Breast epithelium (tissue), 4 donors: ENCODE measurements at regions of chr14 and their contacts with region 1.

Region 1: GRCh38 chr14:36373982-36374673 is 53.7 kb upstream of the MBIP start:
- DNase-seq: peak; percentile 45 to 72
- H3K4me3 ChIP-seq: no peak overlapping the region
- H3K27ac ChIP-seq: no peak overlapping the region
- H3K4me1 ChIP-seq: no peaks in the 10 kb centered on the region
- H3K27me3 ChIP-seq: no peaks in the 10 kb centered on the region
- CTCF ChIP-seq: peak; percentile 48 to 57 (median 57)
- POLR2A ChIP-seq: no peak

Region 2: DNA sequence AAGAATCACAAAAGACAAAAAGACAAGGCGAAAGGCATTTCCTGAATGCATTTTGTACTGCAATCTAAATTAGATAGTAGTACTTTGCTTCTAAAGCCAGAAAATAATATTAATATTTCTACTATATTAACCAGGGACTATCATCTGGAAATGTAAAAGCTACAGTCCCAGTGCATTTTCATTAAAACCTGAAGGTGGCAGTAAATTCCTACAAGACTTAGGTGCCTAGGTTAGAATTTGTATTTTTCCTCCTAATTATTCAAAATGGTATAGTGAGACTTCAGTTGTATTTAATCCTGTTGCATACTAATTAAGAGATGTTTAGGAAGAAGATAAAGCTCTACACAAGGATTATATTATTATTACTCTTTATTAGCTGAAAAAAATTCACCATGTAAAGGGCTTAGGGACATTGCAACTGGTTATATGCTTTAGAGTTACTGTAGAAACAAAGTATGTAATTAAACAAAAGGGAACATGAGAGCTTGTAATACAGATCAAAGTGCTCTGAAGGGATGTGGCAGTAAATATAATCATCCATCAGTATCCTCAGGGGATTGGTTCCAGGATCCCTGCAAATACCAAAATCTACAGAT is 494.4 kb before region 1 on chr14:
- intact Hi-C with region 1: loop called (anchors 5 kb)
- DNase-seq: no peak
- H3K4me3 ChIP-seq: no peak overlapping the region
- H3K27ac ChIP-seq: no peak overlapping the region
- H3K4me1 ChIP-seq: no peaks in the 10 kb centered on the region
- H3K27me3 ChIP-seq: no peaks in the 10 kb centered on the region
- CTCF ChIP-seq: no peak
- POLR2A ChIP-seq: no peak